ENCODE measurements at regions of chr9 and their contacts with region 1.

Region 1: GRCh38 chr9:89323390-89323789 is 5.1 kb downstream of the SECISBP2 start:
- DNase-seq: no peak
- ATAC-seq: no peak
- H3K4me3 ChIP-seq: no peak overlapping the region
- H3K27ac ChIP-seq: no peak overlapping the region
- H3K4me1 ChIP-seq: peaks cover 3% of the 10 kb centered on the region
- H3K27me3 ChIP-seq: no peaks in the 10 kb centered on the region
- CTCF ChIP-seq: no peak
- POLR2A ChIP-seq: no peak
- RAD21 ChIP-seq: no peak

Region 2: DNA sequence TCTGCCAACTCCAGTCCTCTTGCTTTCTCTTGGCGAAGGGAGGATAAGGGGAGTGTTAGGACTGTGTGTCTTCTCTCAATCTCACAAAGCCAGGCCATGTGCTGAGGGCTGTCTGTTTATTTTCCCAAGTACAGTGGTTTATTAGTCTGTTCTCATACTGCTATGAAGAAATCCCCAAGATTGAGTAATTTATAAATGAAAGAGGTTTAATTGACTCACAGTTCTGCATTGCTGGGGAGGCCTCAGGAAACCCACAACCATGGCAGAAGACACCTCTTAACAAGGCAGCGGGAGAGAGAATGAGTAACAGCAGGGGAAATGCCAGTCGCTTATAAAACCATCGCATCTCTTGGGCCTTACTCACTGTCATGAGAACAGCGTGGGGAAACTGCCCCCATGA is 48.6 kb before region 1 on chr9:
- CTCF ChIA-PET with region 1: no interaction called
- POLR2A ChIA-PET with region 1: no interaction called
- dilution Hi-C with region 1: no loop called
- in situ Hi-C with region 1: no loop called
- intact Hi-C with region 1: no loop called
- DNase-seq: peak; percentile 99
- ATAC-seq: peak; percentile 93
- H3K4me3 ChIP-seq: no peak overlapping the region
- H3K27ac ChIP-seq: peak overlapping the region; percentile 55; the same call in 1 of the 2 replicates
- H3K4me1 ChIP-seq: peaks cover 7% of the 10 kb centered on the region; the same call in 1 of the 2 replicates
- H3K27me3 ChIP-seq: no peaks in the 10 kb centered on the region
- CTCF ChIP-seq: no peak
- POLR2A ChIP-seq: 0 out of 2 replicates have a peak, but pooled peaks have one; percentile 28
- RAD21 ChIP-seq: 0 out of 2 replicates have a peak, but pooled peaks have one; percentile 14

Region 3: DNA sequence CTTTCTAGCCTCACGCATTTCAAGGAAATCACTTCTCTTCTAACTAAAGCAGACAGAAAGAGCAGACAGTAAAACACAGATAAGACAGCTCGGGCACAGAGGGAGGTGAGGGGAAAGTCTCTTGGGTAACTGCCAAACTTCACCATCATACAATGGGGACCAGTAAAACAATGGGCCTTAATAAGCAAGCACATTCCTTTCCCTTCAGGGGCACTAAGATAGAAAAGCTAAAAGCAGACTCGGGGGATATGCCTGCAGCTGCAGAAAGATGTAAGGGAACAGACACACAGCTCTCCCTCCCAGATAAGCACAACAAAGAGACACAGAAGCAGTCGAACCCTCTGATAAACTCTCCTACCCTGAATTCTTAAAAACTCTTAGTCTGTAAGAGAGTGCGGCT is 28.0 kb before region 1 on chr9:
- CTCF ChIA-PET with region 1: no interaction called
- POLR2A ChIA-PET with region 1: no interaction called
- dilution Hi-C with region 1: no loop called
- in situ Hi-C with region 1: no loop called
- intact Hi-C with region 1: no loop called
- DNase-seq: no peak
- ATAC-seq: no peak
- H3K4me3 ChIP-seq: no peak overlapping the region
- H3K27ac ChIP-seq: no peak overlapping the region
- H3K4me1 ChIP-seq: no peaks in the 10 kb centered on the region
- H3K27me3 ChIP-seq: no peaks in the 10 kb centered on the region
- CTCF ChIP-seq: no peak
- POLR2A ChIP-seq: no peak
- RAD21 ChIP-seq: no peak

Region 4: DNA sequence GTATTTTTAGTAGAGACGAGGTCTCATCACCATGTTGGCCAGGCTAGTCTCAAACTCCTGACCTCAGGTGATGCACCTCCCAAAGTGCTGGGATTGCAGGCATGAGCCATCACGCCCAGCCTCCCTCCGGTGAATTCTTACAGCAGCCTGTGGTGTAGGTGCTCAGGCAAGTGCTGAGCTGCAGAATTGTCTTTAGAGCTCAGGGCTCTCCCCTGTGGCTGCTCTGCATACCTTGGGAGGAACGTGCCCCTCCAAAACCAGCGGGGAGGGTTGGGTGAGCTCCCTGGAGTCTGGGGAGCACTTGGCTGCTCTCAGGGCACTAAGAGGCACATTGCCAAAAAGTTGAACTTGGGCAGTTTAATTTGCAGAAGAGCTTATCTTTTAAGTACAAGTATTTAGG is 24.3 kb after region 1 on chr9:
- CTCF ChIA-PET with region 1: no interaction called
- POLR2A ChIA-PET with region 1: no interaction called
- dilution Hi-C with region 1: no loop called
- in situ Hi-C with region 1: no loop called
- intact Hi-C with region 1: loop called (anchors 2 kb)
- DNase-seq: no peak
- ATAC-seq: peak; percentile 61
- H3K4me3 ChIP-seq: no peak overlapping the region
- H3K27ac ChIP-seq: peak overlapping the region; percentile 56; the same call in 1 of the 2 replicates
- H3K4me1 ChIP-seq: peaks cover 5% of the 10 kb centered on the region; the same call in 1 of the 2 replicates
- H3K27me3 ChIP-seq: no peaks in the 10 kb centered on the region
- CTCF ChIP-seq: no peak
- POLR2A ChIP-seq: no peak
- RAD21 ChIP-seq: no peak